ENCODE measurements at regions of chr2 and their contacts with region 1.

Region 1: GRCh38 chr2:39094852-39095306 is 26.0 kb downstream of the SOS1 start:
- DNase-seq: no peak
- ATAC-seq: peak; percentile 31
- H3K4me3 Mint-ChIP-seq: no peak overlapping the region
- H3K27ac Mint-ChIP-seq: no peak overlapping the region
- H3K4me1 Mint-ChIP-seq: peaks cover 46% of the 10 kb centered on the region
- H3K27me3 Mint-ChIP-seq: no peaks in the 10 kb centered on the region

Region 2: GRCh38 chr2:39080152-39080551 is 14.7 kb before region 1 on chr2:
- CTCF ChIA-PET with region 1: interaction called, 14 read pairs
- POLR2A ChIA-PET with region 1: no interaction called
- intact Hi-C with region 1: no loop called
- DNase-seq: no peak
- ATAC-seq: no peak
- H3K4me3 Mint-ChIP-seq: no peak overlapping the region
- H3K27ac Mint-ChIP-seq: no peak overlapping the region
- H3K4me1 Mint-ChIP-seq: peaks cover 21% of the 10 kb centered on the region
- H3K27me3 Mint-ChIP-seq: no peaks in the 10 kb centered on the region

Region 3: DNA sequence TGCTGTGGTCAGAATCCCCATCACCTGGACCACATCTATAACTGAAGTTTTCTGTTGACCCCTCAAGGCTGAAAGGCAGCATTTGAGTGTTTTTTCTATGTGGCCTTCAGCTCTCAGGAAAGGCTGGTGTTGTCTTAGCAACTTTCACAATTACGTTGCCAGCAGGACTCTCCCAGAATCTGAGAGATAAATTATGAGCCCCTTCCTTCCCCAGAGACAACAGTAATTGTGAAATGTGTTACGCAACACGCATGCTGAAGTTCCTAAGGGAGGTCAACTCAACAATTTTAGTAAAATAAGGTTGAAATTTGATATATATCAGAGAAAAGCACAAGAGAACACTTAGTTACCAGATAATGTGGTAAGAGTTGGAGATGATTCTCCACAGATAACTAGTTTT is 1573.5 kb after region 1 on chr2:
- CTCF ChIA-PET with region 1: no interaction called
- POLR2A ChIA-PET with region 1: no interaction called
- intact Hi-C with region 1: no loop called
- DNase-seq: no peak
- ATAC-seq: no peak
- H3K4me3 Mint-ChIP-seq: no peak overlapping the region
- H3K27ac Mint-ChIP-seq: no peak overlapping the region
- H3K4me1 Mint-ChIP-seq: no peaks in the 10 kb centered on the region
- H3K27me3 Mint-ChIP-seq: no peaks in the 10 kb centered on the region

Measured in activated CD4-positive, alpha-beta T cell treated with anti-CD3 and anti-CD28 coated beads for 36 hours (primary cell).